Naive thymus-derived CD4-positive, alpha-beta T cell (primary cell): ENCODE measurements at regions of chr12 and their contacts with region 1.

Region 1: GRCh38 chr12:64696080-64696741 is 63.0 kb downstream of the GNS start:
- DNase-seq: no peak
- ATAC-seq: no peak
- H3K4me3 ChIP-seq: no peak overlapping the region
- H3K4me3 Mint-ChIP-seq: peak overlapping the region in 8 of 10 donors; percentile 30 to 74 (median 50)
- H3K27ac ChIP-seq: peak overlapping the region; percentile 51
- H3K27ac Mint-ChIP-seq: peak overlapping the region in 8 of 9 donors; percentile 84 to 97 (median 92)
- H3K4me1 ChIP-seq: peaks cover 14 to 79% of the 10 kb centered on the region in 2 donors
- H3K4me1 Mint-ChIP-seq: peaks cover 58 to 86% (median 81%) of the 10 kb centered on the region in 7 donors
- H3K27me3 ChIP-seq: no peaks in the 10 kb centered on the region
- H3K27me3 Mint-ChIP-seq: no peaks in the 10 kb centered on the region

Region 2: GRCh38 chr12:64544371-64545080 is 151.7 kb before region 1 on chr12:
- CTCF ChIA-PET with region 1: interaction called, 131 read pairs
- POLR2A ChIA-PET with region 1: interaction called, 12 read pairs
- intact Hi-C with region 1: loop called (anchors 1 kb)
- DNase-seq: no peak
- ATAC-seq: no peak
- H3K4me3 ChIP-seq: no peak overlapping the region
- H3K4me3 Mint-ChIP-seq: no peak overlapping the region
- H3K27ac ChIP-seq: no peak overlapping the region
- H3K27ac Mint-ChIP-seq: no peak overlapping the region
- H3K4me1 ChIP-seq: no peaks in the 10 kb centered on the region
- H3K4me1 Mint-ChIP-seq: peaks cover 0 to 4% (median 2%) of the 10 kb centered on the region in 7 donors
- H3K27me3 ChIP-seq: no peaks in the 10 kb centered on the region
- H3K27me3 Mint-ChIP-seq: peaks cover 0 to 16% (median 0%) of the 10 kb centered on the region in 5 donors

Region 3: GRCh38 chr12:64633656-64634337 is 62.4 kb before region 1 on chr12:
- CTCF ChIA-PET with region 1: interaction called, 3 read pairs
- POLR2A ChIA-PET with region 1: interaction called, 900 read pairs
- intact Hi-C with region 1: loop called in 1 of 2 experiments (anchors 1 kb)
- DNase-seq: no peak
- ATAC-seq: peak; percentile 63
- H3K4me3 ChIP-seq: no peak overlapping the region
- H3K4me3 Mint-ChIP-seq: peak overlapping the region in 9 of 10 donors; percentile 39 to 88 (median 63)
- H3K27ac ChIP-seq: peak overlapping the region; percentile 52
- H3K27ac Mint-ChIP-seq: peak overlapping the region; percentile 7 to 90 (median 87)
- H3K4me1 ChIP-seq: peaks cover 46 to 72% of the 10 kb centered on the region in 2 donors
- H3K4me1 Mint-ChIP-seq: peaks cover 50 to 95% (median 82%) of the 10 kb centered on the region in 7 donors
- H3K27me3 ChIP-seq: no peaks in the 10 kb centered on the region
- H3K27me3 Mint-ChIP-seq: no peaks in the 10 kb centered on the region

Region 4: DNA sequence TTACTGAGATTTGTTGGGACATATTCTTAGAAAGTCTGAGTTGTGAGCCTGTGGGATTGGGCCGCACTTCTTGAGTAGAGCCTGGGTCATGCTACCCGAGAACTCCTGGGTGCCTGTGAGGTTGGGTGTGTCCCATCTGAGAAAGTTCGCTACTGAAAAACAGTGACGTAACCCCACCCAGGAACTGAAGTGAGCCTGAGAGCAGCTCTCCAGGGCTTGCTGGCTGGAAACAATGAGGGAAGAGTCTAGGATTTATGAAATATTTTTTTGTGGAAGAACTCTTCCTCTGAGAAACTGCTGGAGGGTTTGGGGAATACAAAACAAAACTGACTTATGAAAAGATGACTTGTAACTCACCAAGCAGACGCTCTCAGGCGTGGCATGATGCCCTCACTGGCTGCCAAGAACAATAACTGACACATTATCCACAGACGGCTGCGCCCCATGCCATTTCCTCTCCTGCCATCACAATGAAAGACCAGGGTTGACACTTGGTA is 16.7 kb before region 1 on chr12:
- CTCF ChIA-PET with region 1: interaction called, 32 read pairs
- POLR2A ChIA-PET with region 1: interaction called, 751 read pairs
- intact Hi-C with region 1: loop called (anchors 1 kb)
- DNase-seq: peak in 8 of 9 donors; percentile 33 to 83 (median 81)
- ATAC-seq: peak; percentile 76
- H3K4me3 ChIP-seq: peak overlapping the region; percentile 37
- H3K4me3 Mint-ChIP-seq: peak overlapping the region; percentile 64 to 85 (median 74)
- H3K27ac ChIP-seq: peak overlapping the region; percentile 76
- H3K27ac Mint-ChIP-seq: peak overlapping the region; percentile 94 to 100 (median 97)
- H3K4me1 ChIP-seq: peaks cover 93 to 97% of the 10 kb centered on the region in 2 donors
- H3K4me1 Mint-ChIP-seq: peaks cover 60 to 99% (median 92%) of the 10 kb centered on the region in 7 donors
- H3K27me3 ChIP-seq: no peaks in the 10 kb centered on the region
- H3K27me3 Mint-ChIP-seq: no peaks in the 10 kb centered on the region

Region 5: DNA sequence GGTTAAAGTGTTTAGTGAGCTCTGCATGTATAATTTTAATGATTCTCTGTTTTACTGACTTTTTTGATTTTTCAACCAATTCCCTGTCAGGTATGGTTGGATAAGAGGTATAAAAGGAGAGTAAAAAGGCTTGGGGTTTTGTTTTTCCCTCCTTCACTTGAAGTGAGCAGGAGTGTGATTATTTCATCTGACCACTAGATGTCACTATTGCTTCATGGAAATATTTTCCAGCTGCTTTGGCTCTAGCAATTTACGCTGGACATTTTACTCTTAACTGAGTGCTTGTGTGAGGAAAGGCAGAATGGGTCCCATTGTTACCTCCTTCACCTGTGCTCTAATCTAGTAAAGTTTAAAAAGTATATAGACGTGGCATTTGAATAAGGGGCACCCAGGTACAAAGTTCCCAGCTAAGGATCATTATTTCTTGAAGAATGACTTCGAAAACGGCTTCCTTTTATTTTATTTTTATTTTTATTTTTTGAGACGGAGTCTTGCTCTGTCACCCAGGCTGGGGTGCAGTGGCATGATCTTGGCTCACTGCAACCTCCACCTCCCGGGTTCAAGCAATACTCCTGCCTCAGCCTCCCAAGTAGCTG is 194.8 kb after region 1 on chr12:
- CTCF ChIA-PET with region 1: no interaction called
- POLR2A ChIA-PET with region 1: no interaction called
- intact Hi-C with region 1: no loop called
- DNase-seq: peak in 7 of 9 donors; percentile 16 to 61 (median 51)
- ATAC-seq: peak; percentile 60
- H3K4me3 ChIP-seq: no peak overlapping the region
- H3K4me3 Mint-ChIP-seq: no peak overlapping the region
- H3K27ac ChIP-seq: no peak overlapping the region
- H3K27ac Mint-ChIP-seq: no peak overlapping the region
- H3K4me1 ChIP-seq: no peaks in the 10 kb centered on the region
- H3K4me1 Mint-ChIP-seq: peaks cover 0 to 2% (median 0%) of the 10 kb centered on the region in 7 donors
- H3K27me3 ChIP-seq: no peaks in the 10 kb centered on the region
- H3K27me3 Mint-ChIP-seq: peaks cover 8 to 17% (median 15%) of the 10 kb centered on the region in 5 donors